Cardiac septum (tissue), 1 donor: ENCODE measurements at regions of chr1 and their contacts with region 1.

Region 1: DNA sequence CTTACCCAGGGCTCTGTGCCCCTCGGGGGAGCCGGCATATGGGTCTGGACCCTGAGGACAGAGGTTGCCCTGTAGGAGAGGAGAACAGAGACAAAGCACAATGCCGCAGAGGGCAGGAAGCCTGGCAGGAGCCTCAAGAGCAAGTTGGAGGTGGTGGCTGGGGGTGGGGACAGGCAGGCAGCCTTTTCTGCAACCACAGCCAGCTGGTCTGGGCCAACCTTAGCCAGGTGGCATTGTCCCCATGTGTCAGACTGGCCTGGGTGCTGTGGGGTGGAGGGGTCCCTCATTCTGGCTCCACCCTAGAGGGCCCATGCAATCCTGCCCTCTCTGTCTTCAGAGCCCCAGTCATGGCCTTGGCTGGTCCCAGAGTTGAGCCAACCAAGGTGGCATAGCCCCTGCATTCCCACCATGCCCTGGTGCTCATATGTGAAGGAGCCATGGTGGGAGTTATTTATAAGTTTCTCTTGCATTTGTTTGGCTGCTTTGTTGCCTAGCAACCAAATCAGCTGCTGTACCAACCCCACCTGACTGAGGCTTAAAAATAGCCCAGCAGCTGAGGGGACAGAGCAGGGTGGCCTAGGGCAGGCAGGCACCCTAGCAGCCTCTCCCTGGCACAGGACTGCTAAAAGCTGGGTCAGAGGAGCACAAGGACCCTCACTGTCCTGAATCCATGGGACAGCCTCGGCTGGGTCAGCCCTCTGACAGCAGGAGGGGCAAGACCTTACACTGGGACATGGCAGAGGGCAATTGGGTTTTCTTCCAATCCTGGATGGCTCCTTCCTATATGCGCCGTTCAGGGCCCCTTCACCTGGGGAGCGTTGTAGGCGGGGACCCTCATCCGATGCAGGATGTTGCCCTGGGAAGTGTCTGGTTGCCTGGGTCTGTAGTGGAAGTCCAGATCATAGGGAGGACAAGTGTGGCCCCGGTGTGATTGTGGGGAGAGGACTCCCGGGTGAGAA is 19.5 kb downstream of the MAP7D1 start:
- DNase-seq: no peak

Region 2: DNA sequence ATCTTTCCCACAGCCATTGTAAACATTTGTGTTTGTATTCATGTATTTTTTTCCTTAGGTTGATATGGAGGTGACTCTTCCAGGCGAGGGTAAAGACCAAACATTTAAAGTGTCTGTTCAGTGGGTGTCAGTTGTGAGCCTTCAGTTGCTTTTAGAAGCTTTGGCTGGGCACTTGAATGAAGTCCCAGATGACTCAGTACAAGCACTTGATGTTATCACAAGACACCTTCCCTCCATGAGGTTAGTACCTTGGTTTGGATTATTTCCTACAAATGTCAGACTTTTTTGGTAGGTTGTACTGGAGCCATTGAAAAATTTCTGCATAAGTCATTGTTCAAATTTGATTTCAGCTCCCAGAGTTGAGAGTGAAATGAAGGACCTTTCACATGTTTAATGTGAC is 350.2 kb before region 1 on chr1:
- intact Hi-C with region 1: no loop called
- DNase-seq: no peak

Region 3: GRCh38 chr1:36155408-36156328 is 19.7 kb before region 1 on chr1 and contains the start of gene MAP7D1:
- intact Hi-C with region 1: loop called (anchors 2 kb)
- DNase-seq: peak; percentile 96
- total RNA-seq, gene MAP7D1: 262 TPM